K562 (cell line): ENCODE measurements at regions of chr10 and their contacts with region 1.

Region 1: GRCh38 chr10:50577681-50578350 is 45.9 kb downstream of the SGMS1 start:
- DNase-seq: peak; percentile 65 to 96 (median 78)
- ATAC-seq: peak; percentile 92
- H3K4me3 ChIP-seq: peak overlapping the region; percentile 24; the same call in 1 of the 2 replicates
- H3K27ac ChIP-seq: peak overlapping the region; percentile 97
- H3K4me1 ChIP-seq: peaks cover 47 to 91% of the 10 kb centered on the region in 2 experiments
- H3K27me3 ChIP-seq: no peaks in the 10 kb centered on the region
- CTCF ChIP-seq: no peak
- EP300 ChIP-seq: peak; percentile 99
- POLR2A ChIP-seq: peak; percentile 65
- RAD21 ChIP-seq: peak in 1 of 2 experiments; percentile 50

Region 2: DNA sequence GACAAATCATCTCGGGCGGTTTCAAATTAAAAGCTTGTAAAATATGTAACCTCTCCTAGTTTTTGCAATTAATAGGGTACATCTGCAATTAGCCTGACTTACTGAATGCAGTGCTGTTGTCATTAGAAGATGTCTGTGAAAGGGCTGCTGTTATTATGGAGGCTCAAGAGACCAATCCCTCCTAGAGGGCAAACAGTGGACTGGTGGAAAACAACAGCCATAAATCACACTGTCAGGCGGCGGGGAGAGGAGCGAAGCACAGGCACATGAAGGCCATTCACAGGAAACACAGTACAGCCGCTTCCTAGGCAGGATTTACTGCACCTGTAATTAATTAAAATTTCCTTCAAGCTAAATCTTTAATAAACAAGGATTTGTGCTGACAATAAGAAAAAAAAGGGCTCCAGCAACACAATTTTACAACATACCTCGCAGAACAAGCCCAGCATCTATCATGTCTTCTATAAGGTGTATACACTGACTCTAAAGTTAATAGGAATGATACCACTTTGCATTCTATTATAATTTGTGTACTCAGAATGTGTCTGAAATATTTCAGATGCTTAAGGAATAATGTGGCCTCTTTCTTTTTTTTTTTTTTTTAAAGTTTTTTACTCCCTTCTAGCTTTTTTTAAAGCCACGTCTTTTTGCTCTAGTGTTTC is 1089.6 kb before region 1 on chr10:
- CTCF ChIA-PET with region 1: no interaction called
- POLR2A ChIA-PET with region 1: no interaction called
- in situ Hi-C with region 1: no loop called
- intact Hi-C with region 1: no loop called
- DNase-seq: peak in 1 of 4 experiments; percentile 14
- ATAC-seq: peak; percentile 57; the same call in 1 of the 3 replicates
- H3K4me3 ChIP-seq: no peak overlapping the region
- H3K27ac ChIP-seq: no peak overlapping the region
- H3K4me1 ChIP-seq: no peaks in the 10 kb centered on the region
- H3K27me3 ChIP-seq: no peaks in the 10 kb centered on the region
- CTCF ChIP-seq: no peak
- EP300 ChIP-seq: no peak
- POLR2A ChIP-seq: no peak
- RAD21 ChIP-seq: no peak

Region 3: DNA sequence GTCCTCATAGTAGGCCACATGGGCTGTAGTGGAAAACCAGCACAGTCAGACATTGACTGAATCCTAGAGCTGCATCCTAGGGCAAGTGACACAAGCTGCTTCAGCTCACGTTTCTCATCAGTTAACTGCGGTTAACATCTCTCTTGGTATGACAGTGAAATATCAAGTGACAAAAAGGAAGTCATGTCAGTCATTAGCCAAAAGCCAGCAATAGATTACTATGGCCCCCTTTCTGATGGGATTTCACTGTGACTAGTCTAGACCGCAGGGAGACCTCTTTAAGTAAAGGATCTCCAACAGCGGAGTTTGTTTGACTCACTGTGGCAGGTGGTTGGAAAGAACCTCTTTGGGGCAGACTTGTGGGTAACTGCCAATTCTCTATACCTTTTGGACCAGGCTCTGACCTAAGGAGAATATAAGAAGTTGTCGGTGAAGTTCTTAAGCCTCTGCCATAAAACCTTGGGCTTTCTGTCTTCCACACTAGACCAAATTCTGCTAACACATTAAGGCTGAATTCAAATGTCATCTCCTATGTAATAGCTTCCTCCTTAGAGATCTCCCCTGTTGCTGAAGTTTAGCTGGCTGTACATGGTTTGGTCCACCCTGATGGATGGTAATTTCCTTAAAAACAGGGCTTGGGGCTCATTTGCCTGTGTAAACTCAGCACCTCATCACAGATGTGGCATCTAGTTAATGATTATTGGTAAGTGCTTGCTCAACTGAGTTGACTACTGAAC is 69.3 kb before region 1 on chr10:
- CTCF ChIA-PET with region 1: no interaction called
- POLR2A ChIA-PET with region 1: no interaction called
- in situ Hi-C with region 1: no loop called
- intact Hi-C with region 1: no loop called
- DNase-seq: no peak
- ATAC-seq: no peak
- H3K4me3 ChIP-seq: no peak overlapping the region
- H3K27ac ChIP-seq: no peak overlapping the region
- H3K4me1 ChIP-seq: peaks cover 8 to 26% of the 10 kb centered on the region in 2 experiments; a peak in 4 of 5 replicates
- H3K27me3 ChIP-seq: no peaks in the 10 kb centered on the region
- CTCF ChIP-seq: no peak
- EP300 ChIP-seq: no peak
- POLR2A ChIP-seq: no peak
- RAD21 ChIP-seq: no peak

Region 4: DNA sequence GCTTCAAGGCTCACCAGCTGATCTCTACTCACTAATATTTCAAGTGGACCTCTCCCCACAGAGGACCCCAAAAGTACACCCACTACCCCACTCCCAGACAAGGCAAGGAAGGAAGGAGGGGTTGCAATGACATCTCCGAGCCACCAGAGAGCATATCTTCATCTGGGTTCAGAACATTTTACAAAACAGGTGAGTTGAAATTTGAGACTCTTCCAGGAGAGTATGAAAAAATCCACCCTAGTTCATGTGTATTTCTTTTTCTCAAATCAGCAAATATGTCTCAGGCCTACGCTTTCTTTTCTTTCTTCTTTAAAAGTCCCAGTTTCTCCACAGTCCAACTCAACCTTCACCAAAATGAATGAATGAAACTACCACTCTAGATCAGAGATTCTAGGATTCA is 16.0 kb before region 1 on chr10:
- CTCF ChIA-PET with region 1: no interaction called
- POLR2A ChIA-PET with region 1: interaction called, 50 read pairs
- in situ Hi-C with region 1: no loop called
- intact Hi-C with region 1: loop called (anchors 2 kb)
- DNase-seq: peak; percentile 50 to 69 (median 53)
- ATAC-seq: peak; percentile 52
- H3K4me3 ChIP-seq: no peak overlapping the region
- H3K27ac ChIP-seq: peak overlapping the region; percentile 3; the same call in 1 of the 3 replicates
- H3K4me1 ChIP-seq: peaks cover 26 to 64% of the 10 kb centered on the region in 2 experiments
- H3K27me3 ChIP-seq: no peaks in the 10 kb centered on the region
- CTCF ChIP-seq: peak; percentile 77 to 87 (median 86)
- EP300 ChIP-seq: no peak
- POLR2A ChIP-seq: no peak
- RAD21 ChIP-seq: peak; percentile 81 to 92

Region 5: GRCh38 chr10:50567384-50567783 is 10.4 kb before region 1 on chr10:
- CTCF ChIA-PET with region 1: no interaction called
- POLR2A ChIA-PET with region 1: interaction called, 50 read pairs
- in situ Hi-C with region 1: no loop called
- intact Hi-C with region 1: loop called (anchors 2 kb)
- DNase-seq: no peak
- ATAC-seq: no peak
- H3K4me3 ChIP-seq: no peak overlapping the region
- H3K27ac ChIP-seq: peak overlapping the region; percentile 19; the same call in 1 of the 3 replicates
- H3K4me1 ChIP-seq: peaks cover 28 to 56% of the 10 kb centered on the region in 2 experiments
- H3K27me3 ChIP-seq: no peaks in the 10 kb centered on the region
- CTCF ChIP-seq: no peak
- EP300 ChIP-seq: no peak
- POLR2A ChIP-seq: no peak
- RAD21 ChIP-seq: no peak

Region 6: DNA sequence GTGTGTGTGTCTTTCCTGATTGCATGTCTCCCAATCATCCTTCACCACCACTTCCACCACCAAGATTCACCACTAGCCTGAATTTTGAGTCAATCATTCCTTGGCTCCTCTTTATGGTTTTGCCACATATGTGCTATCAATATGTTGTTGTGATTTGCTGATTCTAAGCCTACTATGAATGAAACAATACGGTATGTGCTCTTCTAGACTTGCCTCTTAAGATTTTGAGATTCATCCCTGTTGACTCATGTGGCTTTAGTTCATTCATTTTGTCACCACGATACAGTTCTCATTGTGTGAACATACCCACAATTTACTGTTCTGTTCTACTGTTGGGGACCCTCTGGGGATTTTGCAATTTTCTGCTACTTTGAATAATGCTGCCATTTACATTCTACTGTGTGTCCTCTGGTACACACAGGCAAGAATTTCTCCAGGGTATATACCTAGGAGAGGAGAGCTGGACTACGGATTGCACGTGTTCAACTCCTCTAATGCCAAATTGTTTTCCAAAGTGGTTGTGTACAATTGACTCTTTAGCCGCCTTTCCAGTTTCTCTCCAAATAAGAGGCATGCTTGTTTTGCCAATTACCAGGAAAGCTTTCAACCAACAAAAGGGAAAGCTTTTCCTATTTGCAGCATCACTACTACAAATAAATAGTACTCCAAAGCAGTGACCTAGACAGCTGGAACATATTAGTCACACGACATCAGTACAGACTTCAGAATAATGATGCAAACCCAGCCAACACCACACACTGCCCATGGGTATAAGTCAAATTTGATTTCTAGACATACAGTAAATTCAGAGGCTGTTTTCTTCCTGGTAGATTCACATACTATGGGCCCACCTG is 15.9 kb after region 1 on chr10:
- CTCF ChIA-PET with region 1: no interaction called
- POLR2A ChIA-PET with region 1: interaction called, 67 read pairs
- in situ Hi-C with region 1: no loop called
- intact Hi-C with region 1: no loop called
- DNase-seq: no peak
- ATAC-seq: peak; percentile 47
- H3K4me3 ChIP-seq: no peak overlapping the region
- H3K27ac ChIP-seq: peak overlapping the region; percentile 81
- H3K4me1 ChIP-seq: peaks cover 6 to 51% of the 10 kb centered on the region in 2 experiments; a peak in 3 of 5 replicates
- H3K27me3 ChIP-seq: no peaks in the 10 kb centered on the region
- CTCF ChIP-seq: no peak
- EP300 ChIP-seq: no peak
- POLR2A ChIP-seq: no peak
- RAD21 ChIP-seq: no peak

Region 7: DNA sequence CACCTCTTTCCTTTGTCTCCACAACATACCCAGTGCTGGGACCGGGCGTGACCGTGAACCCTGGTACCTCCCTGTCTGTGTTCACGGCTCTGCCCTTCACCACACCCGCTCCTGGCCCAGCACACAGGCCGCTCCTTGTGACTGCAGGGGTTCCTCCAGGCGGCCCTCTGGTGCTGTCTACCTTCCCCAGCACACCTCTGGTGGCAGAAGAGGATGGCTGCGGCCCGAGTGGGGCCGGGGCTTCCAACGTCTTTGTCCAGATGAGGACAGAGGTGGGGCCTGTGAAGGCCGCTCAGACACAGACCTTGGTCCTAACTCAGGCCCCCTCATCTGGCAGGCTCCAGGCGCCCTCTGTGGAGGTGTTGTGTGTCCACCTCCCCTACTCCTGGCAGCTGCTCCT is 101.3 kb after region 1 on chr10:
- CTCF ChIA-PET with region 1: no interaction called
- POLR2A ChIA-PET with region 1: no interaction called
- in situ Hi-C with region 1: no loop called
- intact Hi-C with region 1: no loop called
- DNase-seq: no peak
- ATAC-seq: no peak
- H3K4me3 ChIP-seq: no peak overlapping the region
- H3K27ac ChIP-seq: no peak overlapping the region
- H3K4me1 ChIP-seq: peaks cover 0 to 17% of the 10 kb centered on the region in 2 experiments; a peak in 2 of 5 replicates
- H3K27me3 ChIP-seq: peaks cover 0 to 6% of the 10 kb centered on the region in 2 experiments; a peak in 1 of 5 replicates
- CTCF ChIP-seq: no peak
- EP300 ChIP-seq: no peak
- POLR2A ChIP-seq: no peak
- RAD21 ChIP-seq: 0 out of 4 replicates have a peak, but pooled peaks of 1 of the 2 experiments have one; percentile 3